Vagina (tissue), 2 donors: ENCODE measurements at regions of chr10 and their contacts with region 1.

Region 1: GRCh38 chr10:87861953-87862678 is 1.2 kb downstream of the KLLN start:
- DNase-seq: peak in 1 of 2 donors; percentile 98
- H3K4me3 ChIP-seq: peak overlapping the region; percentile 81 to 88
- H3K27ac ChIP-seq: peak overlapping the region; percentile 99
- H3K4me1 ChIP-seq: peaks cover 22% of the 10 kb centered on the region
- H3K27me3 ChIP-seq: no peaks in the 10 kb centered on the region
- CTCF ChIP-seq: no peak
- POLR2A ChIP-seq: peak in 1 of 2 donors; percentile 65

Region 2: DNA sequence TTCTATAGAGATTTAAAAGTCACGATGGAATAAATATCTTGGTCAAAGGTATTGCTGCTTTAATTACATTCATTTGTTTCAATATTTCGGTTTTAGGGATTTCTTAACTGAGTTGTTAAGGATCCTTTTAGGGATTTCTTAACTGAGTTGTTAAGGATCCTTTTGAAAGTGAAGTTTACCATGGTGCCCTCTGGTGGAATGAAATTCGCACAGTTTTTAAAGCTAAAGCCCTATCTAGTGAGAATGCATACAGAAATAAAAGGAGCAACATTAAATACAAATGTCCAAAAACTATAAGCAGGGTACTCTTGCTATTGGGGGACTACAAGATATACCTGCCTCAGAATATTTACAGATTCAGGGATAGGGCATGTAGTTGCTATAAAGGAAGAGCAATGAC is 527.3 kb after region 1 on chr10:
- intact Hi-C with region 1: loop called (anchors 2 kb)
- DNase-seq: no peak
- H3K4me3 ChIP-seq: no peak overlapping the region
- H3K27ac ChIP-seq: peak overlapping the region; percentile 72
- H3K4me1 ChIP-seq: peaks cover 49% of the 10 kb centered on the region
- H3K27me3 ChIP-seq: no peaks in the 10 kb centered on the region
- CTCF ChIP-seq: peak in 2 of 3 experiments; percentile 34 to 41
- POLR2A ChIP-seq: no peak

Region 3: GRCh38 chr10:88553116-88553752 is 691.1 kb after region 1 on chr10:
- intact Hi-C with region 1: loop called (anchors 10 kb)
- DNase-seq: no peak
- H3K4me3 ChIP-seq: no peak overlapping the region
- H3K27ac ChIP-seq: no peak overlapping the region
- H3K4me1 ChIP-seq: no peaks in the 10 kb centered on the region
- H3K27me3 ChIP-seq: no peaks in the 10 kb centered on the region
- CTCF ChIP-seq: peak in 2 of 3 experiments; percentile 73 to 76
- POLR2A ChIP-seq: no peak